ENCODE measurements at regions of chr12 and their contacts with region 1.

Region 1: DNA sequence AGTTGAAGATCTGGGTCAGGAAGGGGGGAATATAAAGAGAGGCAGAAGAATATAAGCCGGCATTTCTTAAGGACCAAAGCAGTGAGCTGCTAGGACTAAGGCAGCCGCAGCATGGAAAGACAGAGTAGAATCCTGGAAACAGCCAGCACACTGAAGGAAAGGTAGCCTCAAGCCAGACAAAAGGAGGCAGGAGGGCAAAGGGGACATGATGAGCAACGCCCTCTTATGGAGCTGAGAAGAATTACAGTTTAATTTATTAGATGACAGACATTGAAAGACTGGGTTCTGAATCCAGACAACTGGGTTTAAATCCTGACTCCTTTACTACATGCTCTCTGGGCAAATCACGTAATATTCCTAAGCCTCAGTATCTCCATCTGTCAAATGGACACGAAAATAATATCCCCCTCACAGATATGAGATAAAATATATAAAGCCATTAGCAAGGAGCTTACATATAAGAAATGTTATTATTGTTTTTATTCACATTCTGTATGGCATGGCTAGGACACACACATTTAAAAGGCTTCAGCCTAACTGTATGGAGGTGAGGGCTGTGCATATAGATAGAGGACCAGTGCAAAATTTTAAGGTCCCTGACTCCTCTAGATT is 8.1 kb upstream of the PCED1B start:
- DNase-seq: peak in 1 of 2 experiments; percentile 72
- ATAC-seq: peak; percentile 4 to 11; a peak in 3 of 6 replicates
- H3K4me3 ChIP-seq: no peak overlapping the region
- H3K27ac ChIP-seq: peak overlapping the region; percentile 61 to 73; a peak in 5 of 6 replicates
- H3K4me1 ChIP-seq: peaks cover 83% of the 10 kb centered on the region
- CTCF ChIP-seq: peak; percentile 62
- EP300 ChIP-seq: no peak
- POLR2A ChIP-seq: no peak
- RAD21 ChIP-seq: peak; percentile 40 to 63; a peak in 3 of 5 replicates

Region 2: DNA sequence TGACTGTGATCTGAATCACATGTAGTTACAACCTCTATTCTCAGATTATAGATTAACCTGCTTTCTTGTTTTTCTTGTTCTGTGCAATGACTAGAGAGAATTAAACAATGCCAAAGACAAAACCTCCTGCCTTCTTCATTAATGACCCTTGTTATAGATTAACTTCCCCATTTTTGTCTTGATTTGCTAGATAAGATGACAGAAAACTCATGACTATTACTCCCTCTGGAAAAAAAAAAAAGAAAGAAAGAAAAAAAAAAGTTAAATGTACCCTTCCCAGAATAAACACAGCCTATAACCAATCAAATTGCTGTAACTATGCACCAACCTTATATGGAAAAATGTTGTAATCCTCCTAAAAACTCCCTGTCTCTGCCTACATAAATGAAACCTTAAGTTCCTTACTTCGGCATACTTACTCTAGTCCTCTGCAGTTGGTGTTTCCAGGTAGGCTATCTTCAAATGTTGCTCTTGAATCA is 33.0 kb before region 1 on chr12:
- CTCF ChIA-PET with region 1: interaction called, 93 read pairs
- POLR2A ChIA-PET with region 1: interaction called, 18 read pairs
- DNase-seq: peak; percentile 21 to 95
- ATAC-seq: peak; percentile 75 to 84
- H3K4me3 ChIP-seq: peak overlapping the region; percentile 38
- H3K27ac ChIP-seq: peak overlapping the region; percentile 74 to 93
- H3K4me1 ChIP-seq: peaks cover 56% of the 10 kb centered on the region
- CTCF ChIP-seq: no peak
- EP300 ChIP-seq: peak; percentile 20 to 77; a peak in 2 of 5 replicates
- POLR2A ChIP-seq: no peak
- RAD21 ChIP-seq: peak in 1 of 2 experiments; percentile 49; a peak in 3 of 5 replicates

Region 3: GRCh38 chr12:47054659-47055058 is 16.7 kb before region 1 on chr12:
- CTCF ChIA-PET with region 1: interaction called, 25 read pairs
- POLR2A ChIA-PET with region 1: interaction called, 4 read pairs
- DNase-seq: no peak
- ATAC-seq: no peak
- H3K4me3 ChIP-seq: no peak overlapping the region
- H3K27ac ChIP-seq: no peak overlapping the region
- H3K4me1 ChIP-seq: no peaks in the 10 kb centered on the region
- CTCF ChIP-seq: no peak
- EP300 ChIP-seq: no peak
- POLR2A ChIP-seq: no peak
- RAD21 ChIP-seq: no peak

Region 4: DNA sequence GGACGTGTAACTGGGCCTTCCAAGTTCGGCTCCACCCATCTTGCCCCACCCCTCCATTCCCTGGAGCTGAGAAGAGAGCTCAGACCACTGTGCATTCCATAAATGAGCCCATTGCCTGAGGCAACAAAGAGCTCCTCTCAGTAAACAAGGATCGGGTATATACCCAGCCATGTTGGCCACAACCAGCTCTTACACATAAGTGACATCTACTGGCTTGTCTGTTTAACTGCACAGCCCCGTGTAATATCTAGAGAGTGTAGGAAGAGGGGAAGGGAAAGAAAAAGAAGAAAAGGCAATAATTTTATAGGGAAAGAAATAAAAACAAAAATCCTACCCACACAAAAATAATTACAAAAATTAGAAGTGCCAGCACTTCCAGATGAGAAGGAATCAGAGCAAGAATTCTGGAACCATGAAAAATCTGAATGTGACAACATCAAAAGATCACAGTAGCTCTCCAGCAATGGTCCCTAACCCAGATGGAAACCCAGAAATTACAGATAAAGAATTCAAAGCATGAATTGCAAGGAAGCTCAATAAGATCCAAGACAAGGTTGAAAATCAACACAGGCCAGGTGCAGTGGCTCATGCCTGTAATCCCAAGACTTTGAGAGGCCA is 326.4 kb after region 1 on chr12:
- CTCF ChIA-PET with region 1: interaction called, 14 read pairs
- POLR2A ChIA-PET with region 1: no interaction called
- DNase-seq: peak; percentile 51 to 95
- ATAC-seq: peak; percentile 88 to 93
- H3K4me3 ChIP-seq: no peak overlapping the region
- H3K27ac ChIP-seq: peak overlapping the region; percentile 73 to 86
- H3K4me1 ChIP-seq: peaks cover 34% of the 10 kb centered on the region
- CTCF ChIP-seq: peak; percentile 55
- EP300 ChIP-seq: no peak
- POLR2A ChIP-seq: no peak
- RAD21 ChIP-seq: peak; percentile 81 to 94